PC-9 (cell line): ENCODE measurements at regions of chr1 and their contacts with region 1.

Region 1: GRCh38 chr1:70354332-70355110 is at the start of gene ANKRD13C:
- DNase-seq: peak; percentile 89 to 93
- H3K4me3 ChIP-seq: peak within 1 kb of the TSS; percentile 72
- H3K27ac ChIP-seq: peak within 1 kb of the TSS; percentile 76
- H3K4me1 ChIP-seq: peaks cover 18% of the 10 kb centered on the region
- H3K27me3 ChIP-seq: no peaks in the 10 kb centered on the region
- CTCF ChIP-seq: no peak
- total RNA-seq, gene ANKRD13C: 19.4 and 24.3 TPM in 2 replicates

Region 2: DNA sequence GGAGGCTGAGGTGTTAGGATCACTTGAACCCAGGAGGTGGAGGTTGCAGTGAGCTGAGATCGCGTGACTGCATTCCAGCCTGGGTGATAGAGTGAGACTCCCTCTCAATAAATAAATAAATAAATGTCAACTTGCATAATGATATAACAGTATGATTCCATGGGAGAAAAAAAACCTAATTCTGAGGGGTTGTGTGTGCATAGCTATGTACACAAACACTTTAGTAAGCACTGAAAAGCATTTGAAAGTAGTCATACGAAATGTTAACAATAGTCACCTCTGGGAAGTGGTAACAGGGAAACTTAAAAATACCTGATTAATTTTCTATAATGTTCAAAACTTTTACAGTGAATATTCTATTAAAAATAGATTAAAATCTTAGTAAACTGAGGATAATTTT is 43.2 kb before region 1 on chr1:
- CTCF ChIA-PET with region 1: no interaction called
- POLR2A ChIA-PET with region 1: no interaction called
- intact Hi-C with region 1: no loop called
- DNase-seq: no peak
- H3K4me3 ChIP-seq: no peak overlapping the region
- H3K27ac ChIP-seq: no peak overlapping the region
- H3K4me1 ChIP-seq: no peaks in the 10 kb centered on the region
- H3K27me3 ChIP-seq: no peaks in the 10 kb centered on the region
- CTCF ChIP-seq: no peak

Region 3: GRCh38 chr1:70376196-70376595 is 21.7 kb after region 1 on chr1:
- CTCF ChIA-PET with region 1: no interaction called
- POLR2A ChIA-PET with region 1: interaction called, 4 read pairs
- intact Hi-C with region 1: loop called (anchors 1 kb)
- DNase-seq: no peak
- H3K4me3 ChIP-seq: no peak overlapping the region
- H3K27ac ChIP-seq: no peak overlapping the region
- H3K4me1 ChIP-seq: peaks cover 14% of the 10 kb centered on the region
- H3K27me3 ChIP-seq: no peaks in the 10 kb centered on the region
- CTCF ChIP-seq: no peak

Region 4: DNA sequence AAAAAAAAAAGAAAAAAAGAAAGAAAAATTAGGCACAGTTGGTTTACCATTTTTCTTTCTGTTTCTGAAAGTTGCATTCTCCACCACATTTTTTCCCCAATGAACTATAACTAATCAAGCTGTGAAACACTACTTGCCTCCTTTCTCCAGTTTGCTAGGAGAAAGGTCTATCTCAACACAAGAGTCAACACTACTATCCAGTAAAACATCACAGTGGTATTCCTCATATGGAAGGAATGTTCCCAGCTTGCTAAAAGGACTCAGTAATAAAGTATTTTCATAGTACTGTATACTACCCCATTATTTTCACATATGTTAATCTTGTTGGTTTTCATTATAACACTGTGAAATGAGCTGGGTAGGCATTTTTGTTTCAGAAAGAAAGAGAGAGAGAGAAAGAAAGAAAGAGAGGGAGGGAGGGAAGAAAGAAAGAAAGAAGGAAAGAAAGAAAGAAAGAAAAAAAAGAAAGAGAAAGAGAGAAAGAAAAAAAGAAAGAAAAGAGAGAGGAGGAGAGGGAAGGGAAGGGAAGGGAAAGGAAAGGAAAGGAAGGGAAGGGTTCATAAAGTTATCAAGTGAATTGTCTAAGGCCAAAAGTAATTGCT is 685.2 kb after region 1 on chr1:
- CTCF ChIA-PET with region 1: no interaction called
- POLR2A ChIA-PET with region 1: interaction called, 19 read pairs
- intact Hi-C with region 1: no loop called
- DNase-seq: no peak
- H3K4me3 ChIP-seq: no peak overlapping the region
- H3K27ac ChIP-seq: no peak overlapping the region
- H3K4me1 ChIP-seq: no peaks in the 10 kb centered on the region
- H3K27me3 ChIP-seq: no peaks in the 10 kb centered on the region
- CTCF ChIP-seq: no peak